Endothelial cell of umbilical vein (primary cell): ENCODE measurements at regions of chr7 and their contacts with region 1.

Region 1: GRCh38 chr7:142535123-142535779 is 214.0 kb upstream of the PRSS1 start:
- DNase-seq: peak; percentile 86
- H3K4me3 ChIP-seq: no peak overlapping the region
- H3K27ac ChIP-seq: peak overlapping the region; percentile 46
- H3K4me1 ChIP-seq: peaks cover 37% of the 10 kb centered on the region
- H3K27me3 ChIP-seq: no peaks in the 10 kb centered on the region
- CTCF ChIP-seq: peak; percentile 87 to 90
- POLR2A ChIP-seq: peak; percentile 45

Region 2: DNA sequence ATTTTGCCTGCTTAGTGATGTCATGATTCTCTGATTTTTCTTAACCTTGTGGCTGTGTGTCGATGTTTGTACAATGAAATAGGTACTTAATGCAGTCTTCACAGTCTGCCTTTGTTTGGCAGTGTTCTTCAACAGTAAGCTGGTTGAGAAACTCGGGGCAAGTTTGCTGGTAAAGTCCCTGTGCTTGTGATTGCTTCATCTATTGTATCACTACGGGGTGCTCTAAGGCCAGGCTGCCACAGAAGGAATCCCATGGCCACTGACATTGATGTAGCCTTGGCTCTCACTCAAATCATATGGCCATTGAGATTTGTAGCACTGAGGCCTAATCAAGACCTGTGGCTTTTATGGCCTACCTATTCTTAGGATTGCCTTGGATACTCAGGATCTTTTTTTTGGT is 660.5 kb before region 1 on chr7:
- CTCF ChIA-PET with region 1: no interaction called
- POLR2A ChIA-PET with region 1: no interaction called
- dilution Hi-C with region 1: no loop called
- intact Hi-C with region 1: no loop called
- DNase-seq: no peak
- H3K4me3 ChIP-seq: no peak overlapping the region
- H3K27ac ChIP-seq: no peak overlapping the region
- H3K4me1 ChIP-seq: no peaks in the 10 kb centered on the region
- H3K27me3 ChIP-seq: no peaks in the 10 kb centered on the region
- CTCF ChIP-seq: no peak
- POLR2A ChIP-seq: no peak

Region 3: DNA sequence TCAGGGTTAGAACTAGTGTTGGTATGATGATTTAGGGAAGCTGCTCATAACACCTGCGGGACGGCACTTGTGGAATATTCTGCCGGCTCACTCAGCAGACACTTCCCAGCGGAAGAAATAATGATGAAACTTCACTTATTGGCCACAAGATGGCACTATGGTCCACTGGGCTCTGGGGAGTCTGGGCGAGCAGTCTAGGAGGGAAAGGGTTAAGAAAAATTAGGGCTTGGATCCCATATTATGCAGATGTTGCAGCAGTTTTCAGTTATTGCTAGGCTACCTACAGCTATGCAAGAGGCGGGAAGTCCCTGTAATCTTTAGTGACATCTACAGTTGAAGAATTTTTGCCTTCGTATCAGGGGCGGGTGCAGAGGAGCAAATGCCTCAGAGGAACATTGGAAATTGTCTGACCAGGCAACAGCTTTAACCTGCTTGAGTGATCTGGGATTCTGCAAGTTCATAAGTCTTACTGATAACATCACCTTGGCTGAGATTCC is 38.7 kb before region 1 on chr7:
- CTCF ChIA-PET with region 1: interaction called, 10 read pairs
- POLR2A ChIA-PET with region 1: no interaction called
- dilution Hi-C with region 1: no loop called
- intact Hi-C with region 1: no loop called
- DNase-seq: peak; percentile 41
- H3K4me3 ChIP-seq: no peak overlapping the region
- H3K27ac ChIP-seq: no peak overlapping the region
- H3K4me1 ChIP-seq: no peaks in the 10 kb centered on the region
- H3K27me3 ChIP-seq: peaks cover 14 to 27% of the 10 kb centered on the region in 2 experiments
- CTCF ChIP-seq: peak; percentile 65 to 71
- POLR2A ChIP-seq: no peak

Region 4: GRCh38 chr7:142568435-142569097 is 33.3 kb after region 1 on chr7:
- CTCF ChIA-PET with region 1: interaction called, 24 read pairs
- POLR2A ChIA-PET with region 1: no interaction called
- dilution Hi-C with region 1: no loop called
- intact Hi-C with region 1: loop called (anchors 1 kb)
- DNase-seq: peak; percentile 80
- H3K4me3 ChIP-seq: no peak overlapping the region
- H3K27ac ChIP-seq: peak overlapping the region; percentile 44
- H3K4me1 ChIP-seq: peaks cover 27% of the 10 kb centered on the region
- H3K27me3 ChIP-seq: no peaks in the 10 kb centered on the region
- CTCF ChIP-seq: no peak
- POLR2A ChIP-seq: peak; percentile 41

Region 5: DNA sequence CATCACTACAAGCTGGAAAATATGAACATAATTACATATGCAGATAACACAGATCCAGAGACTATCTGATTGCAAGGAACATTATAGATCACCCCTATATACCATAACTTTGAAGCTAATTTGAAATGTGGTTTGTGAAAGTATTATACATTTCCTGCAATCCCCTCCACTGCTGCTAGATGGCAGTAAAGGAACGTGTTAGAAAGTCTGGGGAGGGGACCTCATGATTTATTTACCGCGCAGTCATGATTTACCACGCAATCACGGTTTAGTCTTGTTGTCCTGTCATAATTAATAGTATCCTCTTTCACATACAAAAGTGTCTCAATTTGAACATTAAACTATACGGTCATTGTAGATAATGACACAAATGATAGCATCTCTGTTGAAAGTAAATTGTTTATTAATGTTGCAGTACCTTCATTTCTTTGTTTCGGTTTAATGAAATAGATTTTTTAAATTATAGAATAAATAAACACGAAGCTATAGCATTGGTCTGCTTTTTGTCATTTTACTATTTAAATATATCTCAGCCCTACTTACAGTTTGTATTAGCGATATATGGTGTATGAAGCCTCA is 68.7 kb after region 1 on chr7:
- CTCF ChIA-PET with region 1: interaction called, 86 read pairs
- POLR2A ChIA-PET with region 1: no interaction called
- dilution Hi-C with region 1: no loop called
- intact Hi-C with region 1: loop called (anchors 1 kb)
- DNase-seq: peak; percentile 71
- H3K4me3 ChIP-seq: peak overlapping the region in 2 of 3 experiments; percentile 45 to 68
- H3K27ac ChIP-seq: no peak overlapping the region
- H3K4me1 ChIP-seq: peaks cover 7% of the 10 kb centered on the region
- H3K27me3 ChIP-seq: no peaks in the 10 kb centered on the region
- CTCF ChIP-seq: peak; percentile 67 to 75
- POLR2A ChIP-seq: no peak

Region 6: DNA sequence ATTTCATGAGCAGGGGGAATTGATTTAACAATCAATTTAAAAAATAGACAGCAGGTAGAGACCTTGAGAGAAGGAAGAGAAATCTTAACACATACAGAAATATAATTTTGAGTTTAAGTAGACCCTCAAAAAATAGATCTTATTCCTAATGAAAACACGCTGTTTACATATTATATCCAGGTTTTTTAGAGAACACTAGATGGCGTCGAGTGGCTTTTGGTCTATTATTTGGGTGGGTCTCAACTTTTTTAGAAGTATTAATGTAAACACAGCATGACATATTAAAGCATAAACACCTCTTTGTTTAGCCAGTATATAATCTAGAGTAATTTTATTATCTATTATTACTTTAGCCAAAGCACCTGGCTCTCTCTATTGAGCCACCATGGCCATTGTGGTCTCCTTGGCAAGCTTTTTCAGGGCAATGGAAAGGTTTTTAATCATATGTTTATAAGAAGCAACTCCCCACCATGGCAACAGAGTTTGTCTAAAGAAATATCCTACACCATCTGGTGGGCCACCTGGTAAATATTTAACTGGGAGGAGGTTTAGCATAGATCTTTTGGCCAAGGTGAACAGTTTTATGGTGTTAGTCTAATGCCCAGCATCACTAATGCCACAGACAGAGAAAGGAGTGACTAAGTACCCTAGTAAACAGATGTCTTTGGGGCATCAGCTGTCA is 154.3 kb after region 1 on chr7:
- CTCF ChIA-PET with region 1: interaction called, 6 read pairs
- POLR2A ChIA-PET with region 1: no interaction called
- dilution Hi-C with region 1: no loop called
- intact Hi-C with region 1: loop called (anchors 5 kb)
- DNase-seq: peak; percentile 23
- H3K4me3 ChIP-seq: no peak overlapping the region
- H3K27ac ChIP-seq: no peak overlapping the region
- H3K4me1 ChIP-seq: no peaks in the 10 kb centered on the region
- H3K27me3 ChIP-seq: peaks cover 6 to 13% of the 10 kb centered on the region in 2 experiments
- CTCF ChIP-seq: no peak
- POLR2A ChIP-seq: no peak

Region 7: GRCh38 chr7:142866361-142867058 is 331.3 kb after region 1 on chr7:
- CTCF ChIA-PET with region 1: interaction called, 16 read pairs
- POLR2A ChIA-PET with region 1: no interaction called
- dilution Hi-C with region 1: no loop called
- intact Hi-C with region 1: loop called (anchors 1 kb)
- DNase-seq: peak; percentile 29
- H3K4me3 ChIP-seq: no peak overlapping the region
- H3K27ac ChIP-seq: no peak overlapping the region
- H3K4me1 ChIP-seq: no peaks in the 10 kb centered on the region
- H3K27me3 ChIP-seq: no peaks in the 10 kb centered on the region
- CTCF ChIP-seq: peak; percentile 39 to 64
- POLR2A ChIP-seq: no peak

Region 8: DNA sequence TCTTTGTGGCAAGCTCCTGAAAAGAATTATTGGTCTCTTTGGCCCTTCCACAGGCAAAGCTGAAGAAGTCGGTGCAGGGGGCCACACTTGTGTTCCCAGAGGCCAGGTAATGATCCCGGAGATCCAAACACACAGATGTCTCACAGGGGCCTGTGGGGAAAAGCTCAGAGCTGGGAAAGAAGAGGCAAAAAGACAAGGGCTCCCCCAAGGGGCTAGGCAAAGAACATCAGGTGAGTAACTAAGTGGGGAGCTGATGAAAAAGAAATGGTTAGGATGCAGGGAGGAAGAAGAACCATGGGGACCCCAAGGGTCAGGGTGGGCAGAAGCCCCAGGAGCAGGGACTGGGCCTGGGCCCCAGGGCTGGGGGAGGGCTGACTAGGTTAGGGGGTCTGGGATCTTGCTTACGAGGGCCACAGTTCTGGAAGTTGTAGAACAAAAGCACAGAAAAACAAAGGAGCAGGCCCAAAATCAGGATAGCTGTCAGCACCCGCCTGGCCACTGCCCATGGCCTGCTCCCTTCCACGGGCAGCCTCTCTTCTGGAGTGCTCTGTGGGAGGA is 425.8 kb after region 1 on chr7:
- CTCF ChIA-PET with region 1: no interaction called
- POLR2A ChIA-PET with region 1: no interaction called
- dilution Hi-C with region 1: no loop called
- intact Hi-C with region 1: no loop called
- DNase-seq: no peak
- H3K4me3 ChIP-seq: no peak overlapping the region
- H3K27ac ChIP-seq: no peak overlapping the region
- H3K4me1 ChIP-seq: no peaks in the 10 kb centered on the region
- H3K27me3 ChIP-seq: no peaks in the 10 kb centered on the region
- CTCF ChIP-seq: no peak
- POLR2A ChIP-seq: no peak